A673 (cell line): ENCODE measurements at regions of chr15 and their contacts with region 1.

Region 1: DNA sequence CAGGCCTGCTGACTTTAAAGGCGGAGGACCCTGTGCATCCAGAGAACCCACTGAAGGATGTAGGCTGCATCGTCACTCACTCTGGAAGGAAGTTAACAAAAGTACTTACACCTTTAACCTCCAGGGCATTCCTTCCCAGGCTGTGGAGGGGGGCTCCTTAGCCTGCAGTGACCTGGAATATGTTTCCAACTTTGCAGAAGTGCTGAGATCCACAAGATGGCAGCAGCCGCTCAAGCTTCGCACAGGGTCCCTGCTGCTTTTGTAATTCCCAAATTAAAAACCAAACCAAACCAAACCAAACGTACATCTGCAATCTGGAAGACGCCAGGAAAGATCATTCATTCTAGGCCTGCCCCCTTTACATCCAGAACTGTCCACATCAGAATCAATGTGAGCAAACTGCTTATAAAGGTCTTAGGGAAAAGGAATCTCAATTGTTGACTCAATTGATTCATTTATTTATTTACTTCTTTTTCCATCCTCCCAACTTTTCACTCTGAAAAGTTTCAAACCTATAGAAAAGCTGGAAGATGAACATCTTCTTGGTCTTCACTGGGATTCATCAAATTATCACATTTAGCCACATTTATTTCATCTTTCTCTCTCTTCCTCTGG is 70.5 kb upstream of the KLHL25 start:
- DNase-seq: peak; percentile 70
- H3K4me3 ChIP-seq: no peak overlapping the region
- H3K27ac ChIP-seq: no peak overlapping the region
- H3K4me1 ChIP-seq: no peaks in the 10 kb centered on the region
- H3K27me3 ChIP-seq: peaks cover 11% of the 10 kb centered on the region
- CTCF ChIP-seq: peak; percentile 90

Region 2: DNA sequence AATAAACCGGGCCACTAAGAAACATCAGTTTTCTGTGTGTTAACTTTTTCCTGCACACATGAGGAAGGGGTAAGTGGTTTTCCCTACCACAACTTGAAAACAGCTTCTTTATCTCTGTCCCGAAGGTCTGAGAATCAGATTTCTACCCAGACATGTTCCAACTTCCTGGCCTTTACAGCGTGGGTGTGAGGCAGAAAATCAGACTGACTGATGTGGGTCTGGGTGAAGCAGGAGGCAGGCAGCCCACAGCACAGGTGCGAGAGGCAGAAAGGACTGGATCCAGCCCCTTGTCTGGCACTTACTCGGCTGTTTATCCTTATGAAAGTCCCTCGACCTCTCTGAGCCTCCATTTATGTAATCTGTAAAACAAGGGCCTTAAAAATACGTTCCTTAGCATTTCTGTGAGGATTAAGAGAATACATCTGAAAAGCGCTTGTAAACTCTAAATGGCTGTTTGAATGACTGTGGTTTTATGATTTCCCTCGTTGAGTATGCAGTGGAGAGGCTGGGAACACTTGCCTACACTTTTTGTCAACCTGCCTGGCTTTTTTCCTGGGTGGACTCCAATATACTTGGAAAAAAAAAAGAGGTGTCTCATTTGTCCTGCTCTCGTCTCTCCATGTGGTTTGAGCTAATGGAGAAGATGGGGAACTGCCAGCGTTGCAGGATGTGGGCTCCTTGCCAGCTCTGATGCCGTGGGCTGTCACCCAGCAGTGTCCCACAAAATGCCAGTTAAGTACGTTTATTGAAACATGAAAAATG is 217.6 kb after region 1 on chr15:
- CTCF ChIA-PET with region 1: no interaction called
- POLR2A ChIA-PET with region 1: no interaction called
- intact Hi-C with region 1: loop called (anchors 10 kb)
- DNase-seq: no peak
- H3K4me3 ChIP-seq: no peak overlapping the region
- H3K27ac ChIP-seq: no peak overlapping the region
- H3K4me1 ChIP-seq: no peaks in the 10 kb centered on the region
- H3K27me3 ChIP-seq: peaks cover 19% of the 10 kb centered on the region
- CTCF ChIP-seq: no peak

Region 3: DNA sequence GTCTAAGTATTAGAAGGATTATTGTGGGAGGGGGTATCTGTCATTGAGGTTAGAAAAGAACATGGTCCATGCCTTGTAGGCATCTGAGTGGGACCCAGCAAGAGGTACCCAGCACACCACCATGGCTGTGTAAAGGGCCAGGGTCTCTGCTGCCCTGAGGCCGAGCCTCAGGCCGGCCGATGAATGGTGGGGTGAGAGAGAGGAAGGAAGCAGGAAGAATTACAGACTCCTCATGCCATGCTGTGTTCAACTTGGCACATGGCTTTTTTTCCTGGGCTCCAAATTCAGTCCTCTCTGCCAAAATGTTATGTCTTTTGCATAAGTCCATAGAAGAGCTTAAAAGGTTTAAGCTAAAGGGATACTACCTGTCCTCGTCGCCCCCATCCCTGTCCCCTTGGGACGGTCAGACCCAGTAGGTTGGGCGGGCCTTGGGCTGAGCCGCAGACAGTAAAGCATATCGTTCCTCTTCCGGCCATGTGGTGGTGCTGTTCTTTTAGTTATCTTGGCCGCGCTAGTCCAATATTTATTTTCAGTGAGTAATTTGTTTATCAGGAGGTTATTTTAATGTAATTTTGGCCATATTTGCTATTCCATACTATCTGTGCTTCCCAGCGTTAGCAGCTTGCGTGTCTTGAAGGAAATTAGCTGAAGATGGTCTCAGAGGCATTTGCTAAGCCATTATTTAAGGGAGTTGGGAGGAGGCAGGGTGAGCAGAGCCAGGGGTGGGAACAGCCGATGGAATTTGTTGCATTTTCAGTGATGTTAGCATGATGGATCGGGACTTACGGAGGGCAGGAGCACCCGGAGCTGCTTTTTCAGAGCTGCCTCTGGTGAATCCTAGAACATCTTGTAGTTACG is 366.9 kb after region 1 on chr15:
- CTCF ChIA-PET with region 1: no interaction called
- POLR2A ChIA-PET with region 1: no interaction called
- intact Hi-C with region 1: loop called (anchors 5 kb)
- DNase-seq: peak; percentile 45
- H3K4me3 ChIP-seq: no peak overlapping the region
- H3K27ac ChIP-seq: no peak overlapping the region
- H3K4me1 ChIP-seq: no peaks in the 10 kb centered on the region
- H3K27me3 ChIP-seq: peaks cover 39% of the 10 kb centered on the region
- CTCF ChIP-seq: peak; percentile 80

Region 4: DNA sequence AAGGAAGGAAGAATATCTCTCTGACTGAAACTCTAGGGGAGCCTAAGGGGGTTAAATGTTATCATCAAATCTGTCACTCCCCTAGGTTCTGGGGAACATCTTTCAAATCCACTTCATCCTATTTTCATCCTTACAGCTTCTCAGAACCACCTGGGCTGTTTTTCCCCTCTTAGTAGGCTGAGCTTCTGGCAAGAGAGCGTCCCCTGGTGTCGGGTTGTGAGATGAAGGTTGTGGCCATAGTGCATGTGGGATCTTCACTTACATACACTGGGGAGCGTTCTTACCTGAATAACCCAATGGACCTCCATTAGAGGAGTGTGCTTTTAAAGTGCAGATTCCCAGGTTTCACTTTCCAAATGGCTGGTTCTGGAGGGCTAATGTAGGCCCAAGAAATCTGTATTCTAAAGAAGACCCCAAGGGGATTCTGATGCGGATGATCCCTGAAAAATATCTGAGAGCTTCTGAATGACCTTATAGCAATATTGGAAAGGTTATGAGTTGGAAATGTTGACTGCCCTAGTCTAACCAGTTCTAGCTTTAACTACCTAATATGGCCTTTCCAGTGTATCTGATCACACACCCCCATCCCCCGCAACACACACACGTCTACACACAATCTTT is 878.2 kb after region 1 on chr15:
- CTCF ChIA-PET with region 1: interaction called, 3 read pairs
- POLR2A ChIA-PET with region 1: no interaction called
- intact Hi-C with region 1: loop called (anchors 5 kb)
- DNase-seq: peak; percentile 34
- H3K4me3 ChIP-seq: no peak overlapping the region
- H3K27ac ChIP-seq: no peak overlapping the region
- H3K4me1 ChIP-seq: no peaks in the 10 kb centered on the region
- H3K27me3 ChIP-seq: no peaks in the 10 kb centered on the region
- CTCF ChIP-seq: peak; percentile 69

Region 5: DNA sequence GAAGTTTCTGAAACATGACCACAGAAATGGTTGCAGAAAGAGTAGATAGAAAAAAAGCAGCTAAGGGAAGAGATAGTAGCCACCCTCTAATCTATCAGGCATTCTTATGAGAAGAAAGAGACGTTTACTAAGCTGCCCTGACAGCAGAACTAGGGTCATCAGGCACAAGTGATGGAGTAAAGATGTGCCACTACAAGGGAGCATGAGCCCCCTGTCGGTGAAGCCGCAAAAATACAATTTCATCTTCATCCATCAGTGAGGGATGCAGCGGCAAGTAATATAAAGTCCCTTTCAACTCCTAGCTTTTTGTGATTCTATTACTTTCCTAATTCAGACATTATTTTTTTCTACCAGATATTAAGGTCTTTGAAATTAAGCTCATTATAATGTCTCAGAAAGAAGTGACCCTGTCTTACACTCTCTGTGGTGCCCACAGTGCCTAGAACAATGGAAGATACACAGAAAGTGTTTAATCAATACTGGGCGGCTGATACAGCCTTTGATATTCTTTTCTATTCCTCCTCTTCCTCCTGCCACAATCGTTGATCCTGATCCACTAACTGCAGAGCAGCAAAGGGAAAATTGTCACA is 1739.8 kb after region 1 on chr15:
- CTCF ChIA-PET with region 1: no interaction called
- POLR2A ChIA-PET with region 1: no interaction called
- intact Hi-C with region 1: loop called (anchors 5 kb)
- DNase-seq: peak; percentile 26
- H3K4me3 ChIP-seq: no peak overlapping the region
- H3K27ac ChIP-seq: no peak overlapping the region
- H3K4me1 ChIP-seq: no peaks in the 10 kb centered on the region
- H3K27me3 ChIP-seq: no peaks in the 10 kb centered on the region
- CTCF ChIP-seq: peak; percentile 62